ENCODE measurements at regions of chr6 and their contacts with region 1.

Region 1: DNA sequence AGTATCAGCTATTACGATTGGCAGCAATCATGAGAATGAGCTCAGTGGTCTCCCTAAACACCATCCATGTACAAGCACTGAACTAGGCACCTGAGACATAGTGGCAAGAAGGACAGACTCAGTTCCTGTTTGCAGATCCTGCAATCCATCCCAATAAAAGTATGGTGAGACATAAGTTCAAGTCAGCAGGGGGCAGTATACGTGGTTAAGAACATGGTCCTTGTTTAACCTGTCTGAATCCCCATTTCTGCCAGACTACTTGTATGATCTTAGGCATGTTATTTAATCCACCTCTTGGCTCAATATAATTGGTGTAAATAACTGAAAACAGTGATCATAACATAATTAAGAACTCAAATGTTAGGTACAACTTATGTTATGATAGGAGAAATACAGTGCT is 33.2 kb upstream of the PNISR start:
- DNase-seq: peak; percentile 44
- ATAC-seq: no peak; the same call in 1 of the 2 replicates
- H3K4me3 ChIP-seq: no peak overlapping the region
- H3K27ac ChIP-seq: no peak overlapping the region
- H3K4me1 ChIP-seq: no peaks in the 10 kb centered on the region
- H3K27me3 ChIP-seq: no peaks in the 10 kb centered on the region
- CTCF ChIP-seq: peak; percentile 32; the same call in 1 of the 2 replicates
- POLR2A ChIP-seq: no peak
- RAD21 ChIP-seq: no peak

Region 2: DNA sequence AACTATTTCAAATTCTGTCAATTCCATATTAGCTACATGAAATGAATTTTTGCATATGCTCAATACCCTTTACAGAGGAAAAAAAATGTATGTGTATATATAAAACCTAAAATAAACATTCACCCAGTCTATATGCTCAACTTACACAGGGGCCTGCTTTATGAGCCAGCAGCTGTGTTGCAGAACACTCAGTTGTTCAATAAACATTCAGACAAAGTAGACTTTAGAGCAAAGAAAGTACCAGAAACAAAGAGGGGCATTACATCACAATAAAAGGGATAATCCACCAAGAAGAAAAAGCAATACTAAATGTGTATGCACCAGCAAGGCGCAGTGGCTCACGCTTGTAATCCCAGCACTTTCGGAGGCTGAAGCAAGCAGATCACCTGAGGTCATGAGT is 73.8 kb before region 1 on chr6:
- CTCF ChIA-PET with region 1: no interaction called
- POLR2A ChIA-PET with region 1: no interaction called
- dilution Hi-C with region 1: no loop called
- in situ Hi-C with region 1: no loop called
- intact Hi-C with region 1: no loop called
- DNase-seq: peak; percentile 44
- ATAC-seq: peak; percentile 76
- H3K4me3 ChIP-seq: no peak overlapping the region
- H3K27ac ChIP-seq: peak overlapping the region; percentile 54; the same call in 1 of the 2 replicates
- H3K4me1 ChIP-seq: peaks cover 4% of the 10 kb centered on the region; the same call in 1 of the 2 replicates
- H3K27me3 ChIP-seq: no peaks in the 10 kb centered on the region
- CTCF ChIP-seq: no peak
- POLR2A ChIP-seq: no peak
- RAD21 ChIP-seq: no peak

Region 3: GRCh38 chr6:99434702-99435530 is 23.4 kb before region 1 on chr6:
- CTCF ChIA-PET with region 1: interaction called, 6 read pairs
- POLR2A ChIA-PET with region 1: no interaction called
- dilution Hi-C with region 1: no loop called
- in situ Hi-C with region 1: no loop called
- intact Hi-C with region 1: loop called (anchors 2 kb)
- DNase-seq: peak; percentile 44
- ATAC-seq: peak; percentile 79
- H3K4me3 ChIP-seq: no peak overlapping the region
- H3K27ac ChIP-seq: no peak overlapping the region
- H3K4me1 ChIP-seq: peaks cover 5% of the 10 kb centered on the region; the same call in 1 of the 2 replicates
- H3K27me3 ChIP-seq: no peaks in the 10 kb centered on the region
- CTCF ChIP-seq: peak; percentile 59
- POLR2A ChIP-seq: no peak
- RAD21 ChIP-seq: peak; percentile 21; the same call in 1 of the 2 replicates

Measured in IMR-90 (cell line).